HepG2 (cell line): ENCODE measurements at regions of chr6 and their contacts with region 1.

Region 1: DNA sequence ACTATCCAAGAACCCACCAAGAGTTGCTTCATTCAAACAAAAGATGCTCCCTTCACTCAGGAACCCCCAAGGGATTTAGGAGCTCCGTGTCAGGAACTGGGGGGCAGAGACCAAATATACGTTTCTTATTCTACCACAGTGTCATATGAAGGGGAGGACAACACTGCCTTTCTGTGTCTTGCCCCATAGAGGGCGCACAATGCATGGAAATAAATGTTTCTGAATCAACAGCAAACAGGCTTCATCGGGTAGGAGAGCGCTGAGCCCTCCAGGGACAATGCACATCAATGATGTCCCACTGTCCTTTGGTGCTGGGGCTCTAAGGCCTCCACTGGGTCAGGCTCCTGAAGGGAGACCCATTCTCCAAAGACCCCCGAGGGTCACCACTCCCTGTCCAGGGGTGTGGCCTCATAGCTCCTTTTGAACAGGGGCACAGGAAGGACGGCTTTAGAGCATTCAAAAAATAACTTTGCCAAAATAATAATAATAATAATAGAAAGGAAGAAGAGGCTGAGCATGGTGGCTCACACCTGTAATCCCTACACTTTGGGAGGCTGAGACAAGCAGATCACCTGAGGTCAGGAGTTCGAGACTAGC is 31.1 kb downstream of the PLG start:
- DNase-seq: peak; percentile 47
- ATAC-seq: peak; percentile 86
- H3K4me3 ChIP-seq: no peak overlapping the region
- H3K27ac ChIP-seq: no peak overlapping the region
- H3K4me1 ChIP-seq: no peaks in the 10 kb centered on the region
- H3K27me3 ChIP-seq: no peaks in the 10 kb centered on the region
- CTCF ChIP-seq: peak; percentile 86
- EP300 ChIP-seq: no peak
- POLR2A ChIP-seq: no peak
- RAD21 ChIP-seq: peak; percentile 53

Region 2: GRCh38 chr6:160766989-160767660 is 34.0 kb after region 1 on chr6:
- CTCF ChIA-PET with region 1: interaction called, 7 read pairs
- POLR2A ChIA-PET with region 1: interaction called, 4 read pairs
- in situ Hi-C with region 1: no loop called
- intact Hi-C with region 1: loop called (anchors 1 kb)
- DNase-seq: peak; percentile 39
- ATAC-seq: peak; percentile 99
- H3K4me3 ChIP-seq: peak overlapping the region; percentile 35 to 72 (median 54); a peak in 5 of 6 replicates
- H3K27ac ChIP-seq: no peak overlapping the region
- H3K4me1 ChIP-seq: no peaks in the 10 kb centered on the region
- H3K27me3 ChIP-seq: peaks cover 3 to 14% of the 10 kb centered on the region in 2 experiments; a peak in 3 of 5 replicates
- CTCF ChIP-seq: peak; percentile 96
- EP300 ChIP-seq: no peak
- POLR2A ChIP-seq: no peak
- RAD21 ChIP-seq: peak; percentile 68